ENCODE measurements at regions of chr1 and their contacts with region 1.

Region 1: DNA sequence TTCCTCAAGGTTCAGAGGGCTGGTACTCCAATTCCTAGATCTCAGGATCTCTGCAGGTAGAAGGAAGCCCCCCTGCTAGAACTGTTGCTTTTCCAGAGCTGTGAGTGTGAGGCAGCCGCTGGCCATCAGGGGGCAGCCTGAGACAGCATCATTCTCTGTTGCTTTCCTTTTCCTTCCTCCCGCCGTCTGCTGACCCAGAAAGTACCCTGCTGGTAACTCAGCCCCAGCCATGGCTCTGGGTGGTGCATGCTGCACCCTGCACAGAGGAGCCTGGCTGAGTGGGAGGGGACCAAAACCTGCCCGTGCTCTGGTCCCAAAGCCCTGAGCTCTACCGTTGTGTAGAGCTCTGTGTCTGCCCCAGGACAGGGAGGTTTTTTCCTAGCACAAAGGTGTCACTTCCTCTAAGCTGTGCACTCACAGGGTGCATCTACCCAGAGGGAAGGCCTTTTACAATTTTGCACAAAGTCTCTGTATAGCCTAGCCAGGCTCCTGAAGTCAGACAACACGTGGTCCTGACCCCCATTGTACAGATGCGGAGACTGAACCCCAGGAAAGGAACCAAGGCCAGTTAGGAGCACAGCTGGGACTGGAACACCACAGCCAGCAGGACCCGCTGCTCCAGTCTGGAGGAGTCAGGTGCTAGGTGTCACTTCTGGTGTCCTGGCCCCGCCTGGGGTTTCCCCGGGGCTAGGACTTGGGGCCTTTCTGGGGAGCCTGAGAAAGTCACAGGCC is 5.6 kb upstream of the FAM131C start:
- DNase-seq: peak; percentile 85
- H3K4me3 ChIP-seq: peak overlapping the region in 1 of 4 donors; percentile 25
- H3K27ac ChIP-seq: peak overlapping the region in 1 of 4 donors; percentile 4
- H3K4me1 ChIP-seq: peaks cover 4 to 22% (median 13%) of the 10 kb centered on the region in 4 donors
- H3K27me3 ChIP-seq: no peaks in the 10 kb centered on the region
- CTCF ChIP-seq: peak; percentile 86 to 96 (median 87)
- EP300 ChIP-seq: no peak
- POLR2A ChIP-seq: no peak

Region 2: GRCh38 chr1:15550573-15550972 is 528.5 kb before region 1 on chr1:
- in situ Hi-C with region 1: no loop called
- intact Hi-C with region 1: no loop called
- DNase-seq: no peak
- H3K4me3 ChIP-seq: no peak overlapping the region
- H3K27ac ChIP-seq: no peak overlapping the region
- H3K4me1 ChIP-seq: no peaks in the 10 kb centered on the region
- H3K27me3 ChIP-seq: no peaks in the 10 kb centered on the region
- CTCF ChIP-seq: no peak
- EP300 ChIP-seq: no peak
- POLR2A ChIP-seq: no peak

Region 3: GRCh38 chr1:16181887-16182719 is 103.0 kb after region 1 on chr1:
- in situ Hi-C with region 1: loop called in 3 of 4 experiments (anchors 5 kb)
- intact Hi-C with region 1: loop called (anchors 1 kb)
- DNase-seq: peak; percentile 84
- H3K4me3 ChIP-seq: no peak overlapping the region
- H3K27ac ChIP-seq: peak overlapping the region; percentile 77 to 92 (median 84)
- H3K4me1 ChIP-seq: peaks cover 16 to 38% (median 24%) of the 10 kb centered on the region in 4 donors
- H3K27me3 ChIP-seq: no peaks in the 10 kb centered on the region
- CTCF ChIP-seq: no peak
- EP300 ChIP-seq: no peak
- POLR2A ChIP-seq: peak; percentile 42

Region 4: GRCh38 chr1:16187748-16188401 is 108.8 kb after region 1 on chr1:
- in situ Hi-C with region 1: loop called (anchors 5 kb)
- intact Hi-C with region 1: loop called (anchors 1 kb)
- DNase-seq: peak; percentile 82
- H3K4me3 ChIP-seq: no peak overlapping the region
- H3K27ac ChIP-seq: peak overlapping the region; percentile 53 to 74 (median 68)
- H3K4me1 ChIP-seq: peaks cover 2 to 31% (median 21%) of the 10 kb centered on the region in 4 donors
- H3K27me3 ChIP-seq: no peaks in the 10 kb centered on the region
- CTCF ChIP-seq: peak; percentile 94 to 99 (median 98)
- EP300 ChIP-seq: no peak
- POLR2A ChIP-seq: no peak

Region 5: GRCh38 chr1:16243936-16244649 is 165.0 kb after region 1 on chr1:
- in situ Hi-C with region 1: no loop called
- intact Hi-C with region 1: loop called (anchors 5 kb)
- DNase-seq: peak; percentile 85
- H3K4me3 ChIP-seq: no peak overlapping the region
- H3K27ac ChIP-seq: no peak overlapping the region
- H3K4me1 ChIP-seq: peaks cover 14 to 23% (median 18%) of the 10 kb centered on the region in 4 donors
- H3K27me3 ChIP-seq: no peaks in the 10 kb centered on the region
- CTCF ChIP-seq: peak; percentile 83 to 90 (median 86)
- EP300 ChIP-seq: no peak
- POLR2A ChIP-seq: no peak

Region 6: GRCh38 chr1:16351994-16352841 is 273.1 kb after region 1 on chr1 and contains the start of gene FBXO42:
- in situ Hi-C with region 1: loop called in 1 of 4 experiments (anchors 25 kb)
- intact Hi-C with region 1: no loop called
- DNase-seq: peak; percentile 92
- H3K4me3 ChIP-seq: peak within 1 kb of the TSS; percentile 79 to 90 (median 86)
- H3K27ac ChIP-seq: peak within 1 kb of the TSS; percentile 92 to 95 (median 95)
- H3K4me1 ChIP-seq: peaks cover 12 to 39% (median 15%) of the 10 kb centered on the region in 4 donors
- H3K27me3 ChIP-seq: no peaks in the 10 kb centered on the region
- CTCF ChIP-seq: peak in 3 of 5 experiments; percentile 32 to 50 (median 43)
- EP300 ChIP-seq: no peak
- POLR2A ChIP-seq: peak; percentile 80
- total RNA-seq, gene FBXO42: 15.7 to 25.4 (median 18.8) TPM

Region 7: DNA sequence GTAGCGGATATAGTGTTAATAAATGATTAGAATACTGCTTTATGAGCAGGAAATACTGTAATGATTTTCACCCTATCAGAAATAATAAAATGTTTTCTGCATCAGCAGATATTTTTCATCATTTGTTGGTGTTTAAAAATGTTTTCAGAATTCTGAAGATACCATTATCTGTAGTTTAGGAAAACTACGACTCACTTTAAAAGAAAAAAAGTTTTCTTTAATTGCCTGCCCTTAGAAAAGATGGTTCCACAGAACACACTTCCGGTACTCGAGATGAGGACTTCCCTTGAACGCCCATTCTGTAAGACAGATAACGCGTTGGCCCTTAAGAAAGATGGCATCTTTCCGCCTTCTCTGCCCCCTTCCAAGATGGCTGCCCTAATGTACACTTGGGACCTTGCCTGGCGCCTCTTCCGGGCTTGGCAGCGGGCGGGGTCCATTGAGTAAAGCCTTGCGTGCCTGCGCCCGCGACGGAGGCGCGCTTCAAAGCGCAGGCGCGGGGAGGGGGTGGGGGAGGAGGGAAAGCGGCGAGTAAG is 287.7 kb after region 1 on chr1 and contains the start of gene SZRD1:
- in situ Hi-C with region 1: loop called in 2 of 4 experiments (anchors 10 to 25 kb)
- intact Hi-C with region 1: loop called (anchors 10 kb)
- DNase-seq: peak; percentile 97
- H3K4me3 ChIP-seq: peak within 1 kb of the TSS; percentile 62 to 90 (median 73)
- H3K27ac ChIP-seq: peak within 1 kb of the TSS; percentile 93 to 98 (median 98)
- H3K4me1 ChIP-seq: peaks cover 2 to 33% (median 18%) of the 10 kb centered on the region in 4 donors
- H3K27me3 ChIP-seq: no peaks in the 10 kb centered on the region
- CTCF ChIP-seq: no peak
- EP300 ChIP-seq: no peak
- POLR2A ChIP-seq: no peak
- total RNA-seq, gene SZRD1: 54.6 to 66.8 (median 61.7) TPM

Region 8: GRCh38 chr1:16474166-16474800 is 395.2 kb after region 1 on chr1:
- in situ Hi-C with region 1: no loop called
- intact Hi-C with region 1: no loop called
- DNase-seq: no peak
- H3K4me3 ChIP-seq: no peak overlapping the region
- H3K27ac ChIP-seq: no peak overlapping the region
- H3K4me1 ChIP-seq: no peaks in the 10 kb centered on the region
- H3K27me3 ChIP-seq: no peaks in the 10 kb centered on the region
- CTCF ChIP-seq: no peak
- EP300 ChIP-seq: no peak
- POLR2A ChIP-seq: no peak